H1 (cell line): ENCODE measurements at regions of chr3 and their contacts with region 1.

Region 1: GRCh38 chr3:172673210-172673679 is 37.6 kb downstream of the NCEH1 start:
- DNase-seq: peak in 1 of 2 experiments; percentile 78
- H3K4me3 ChIP-seq: no peak overlapping the region
- H3K27ac ChIP-seq: no peak overlapping the region
- H3K4me1 ChIP-seq: peaks cover 2 to 14% (median 10%) of the 10 kb centered on the region in 4 experiments; a peak in 5 of 7 replicates
- H3K27me3 ChIP-seq: no peaks in the 10 kb centered on the region
- CTCF ChIP-seq: peak; percentile 33 to 76 (median 72)
- EP300 ChIP-seq: no peak
- POLR2A ChIP-seq: no peak
- RAD21 ChIP-seq: peak; percentile 74 to 79

Region 2: GRCh38 chr3:172256101-172256734 is 417.0 kb before region 1 on chr3:
- CTCF ChIA-PET with region 1: no interaction called
- POLR2A ChIA-PET with region 1: no interaction called
- DNase-seq: no peak
- H3K4me3 ChIP-seq: no peak overlapping the region
- H3K27ac ChIP-seq: no peak overlapping the region
- H3K4me1 ChIP-seq: peaks cover 0 to 6% (median 4%) of the 10 kb centered on the region in 4 experiments; a peak in 5 of 7 replicates
- H3K27me3 ChIP-seq: no peaks in the 10 kb centered on the region
- CTCF ChIP-seq: no peak
- EP300 ChIP-seq: no peak
- POLR2A ChIP-seq: no peak
- RAD21 ChIP-seq: no peak

Region 3: GRCh38 chr3:172536993-172537419 is 136.2 kb before region 1 on chr3:
- CTCF ChIA-PET with region 1: no interaction called
- POLR2A ChIA-PET with region 1: no interaction called
- DNase-seq: no peak
- H3K4me3 ChIP-seq: no peak overlapping the region
- H3K27ac ChIP-seq: no peak overlapping the region
- H3K4me1 ChIP-seq: no peaks in the 10 kb centered on the region
- H3K27me3 ChIP-seq: no peaks in the 10 kb centered on the region
- CTCF ChIP-seq: no peak
- EP300 ChIP-seq: no peak
- POLR2A ChIP-seq: no peak
- RAD21 ChIP-seq: no peak

Region 4: GRCh38 chr3:172658344-172659245 is 14.7 kb before region 1 on chr3:
- CTCF ChIA-PET with region 1: interaction called, 26 read pairs
- POLR2A ChIA-PET with region 1: no interaction called
- DNase-seq: no peak
- H3K4me3 ChIP-seq: no peak overlapping the region
- H3K27ac ChIP-seq: no peak overlapping the region
- H3K4me1 ChIP-seq: peaks cover 0 to 2% (median 0%) of the 10 kb centered on the region in 4 experiments; a peak in 2 of 7 replicates
- H3K27me3 ChIP-seq: no peaks in the 10 kb centered on the region
- CTCF ChIP-seq: no peak
- EP300 ChIP-seq: no peak
- POLR2A ChIP-seq: no peak
- RAD21 ChIP-seq: no peak

Region 5: GRCh38 chr3:172692751-172693338 is 19.6 kb after region 1 on chr3:
- CTCF ChIA-PET with region 1: interaction called, 16 read pairs
- POLR2A ChIA-PET with region 1: interaction called, 3 read pairs
- DNase-seq: no peak
- H3K4me3 ChIP-seq: no peak overlapping the region
- H3K27ac ChIP-seq: no peak overlapping the region
- H3K4me1 ChIP-seq: peaks cover 0 to 10% (median under 1%) of the 10 kb centered on the region in 4 experiments; a peak in 2 of 7 replicates
- H3K27me3 ChIP-seq: no peaks in the 10 kb centered on the region
- CTCF ChIP-seq: no peak
- EP300 ChIP-seq: no peak
- POLR2A ChIP-seq: no peak
- RAD21 ChIP-seq: no peak

Region 6: DNA sequence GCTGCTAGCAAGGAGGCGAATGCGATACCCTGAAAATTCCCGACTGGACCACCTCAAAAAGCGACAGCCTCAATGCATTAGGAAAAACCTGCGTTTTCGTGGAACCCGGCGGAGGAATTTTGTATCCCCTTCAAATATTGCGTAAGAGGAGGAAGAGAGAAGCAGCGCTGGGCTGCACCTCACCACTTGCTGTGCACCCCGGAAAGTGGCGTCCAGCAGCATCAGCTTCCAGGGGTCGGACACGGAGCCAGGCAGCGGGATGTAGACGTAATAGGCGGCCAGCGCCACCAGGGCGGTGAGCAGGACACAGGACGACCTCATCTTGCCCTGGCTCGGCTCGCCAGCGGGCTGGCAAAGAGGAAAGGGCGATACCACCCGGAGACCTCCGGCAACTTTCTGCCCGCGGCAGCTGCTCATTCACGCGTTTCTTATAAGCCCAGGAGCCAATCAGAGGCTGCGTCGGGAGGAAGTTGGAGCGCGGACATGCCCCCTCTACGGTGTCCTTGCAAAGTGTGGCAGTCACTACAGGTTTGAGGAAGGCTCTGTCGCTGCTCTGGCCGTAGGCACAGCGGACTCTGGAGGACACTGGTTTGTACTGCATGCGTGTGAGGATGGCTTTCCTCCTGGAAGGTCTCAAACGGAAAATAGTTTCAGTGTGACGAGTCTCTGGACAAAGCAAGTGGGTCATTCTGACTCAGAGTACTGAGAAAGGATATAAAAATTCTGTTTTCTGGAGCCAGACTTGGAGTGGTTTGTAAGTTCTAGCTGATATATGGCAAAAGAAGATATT is 37.6 kb after region 1 on chr3 and contains the start of gene NCEH1:
- CTCF ChIA-PET with region 1: interaction called, 30 read pairs
- POLR2A ChIA-PET with region 1: no interaction called
- DNase-seq: peak; percentile 85 to 93
- H3K4me3 ChIP-seq: peak within 1 kb of the TSS; percentile 56 to 93 (median 90)
- H3K27ac ChIP-seq: no peak within 1 kb of the TSS
- H3K4me1 ChIP-seq: peaks cover 0 to 4% (median 0%) of the 10 kb centered on the region in 4 experiments; a peak in 1 of 7 replicates
- H3K27me3 ChIP-seq: 0 out of 7 replicates have a peak, but pooled peaks cover 0 to 1% (median 0%) of the 10 kb centered on the region in 4 experiments
- CTCF ChIP-seq: peak; percentile 84 to 91 (median 90)
- EP300 ChIP-seq: 0 out of 3 replicates have a peak, but pooled peaks of 1 of the 2 experiments have one; percentile 12
- POLR2A ChIP-seq: peak; percentile 44 to 86
- RAD21 ChIP-seq: peak; percentile 73 to 82
- total RNA-seq, gene NCEH1: 5.4 and 6.4 TPM in 2 replicates

Region 7: GRCh38 chr3:172750368-172751174 is 77.3 kb after region 1 on chr3 and contains the start of gene ECT2:
- CTCF ChIA-PET with region 1: interaction called, 34 read pairs
- POLR2A ChIA-PET with region 1: interaction called, 7 read pairs
- DNase-seq: peak; percentile 96 to 100
- H3K4me3 ChIP-seq: peak within 1 kb of the TSS; percentile 81 to 94 (median 90)
- H3K27ac ChIP-seq: peak within 1 kb of the TSS; percentile 89
- H3K4me1 ChIP-seq: no peaks in the 10 kb centered on the region; a peak in 1 of 7 replicates
- H3K27me3 ChIP-seq: no peaks in the 10 kb centered on the region
- CTCF ChIP-seq: peak; percentile 57 to 80 (median 71)
- EP300 ChIP-seq: peak; percentile 4 to 32; a peak in 1 of 3 replicates
- POLR2A ChIP-seq: peak; percentile 95 to 97
- RAD21 ChIP-seq: peak; percentile 53 to 61
- total RNA-seq, gene ECT2: 76.2 and 88.7 TPM in 2 replicates

Region 8: GRCh38 chr3:172832983-172833382 is 159.7 kb after region 1 on chr3:
- CTCF ChIA-PET with region 1: no interaction called
- POLR2A ChIA-PET with region 1: no interaction called
- DNase-seq: no peak
- H3K4me3 ChIP-seq: no peak overlapping the region
- H3K27ac ChIP-seq: no peak overlapping the region
- H3K4me1 ChIP-seq: no peaks in the 10 kb centered on the region
- H3K27me3 ChIP-seq: no peaks in the 10 kb centered on the region
- CTCF ChIP-seq: no peak
- EP300 ChIP-seq: no peak
- POLR2A ChIP-seq: no peak
- RAD21 ChIP-seq: no peak

Region 9: DNA sequence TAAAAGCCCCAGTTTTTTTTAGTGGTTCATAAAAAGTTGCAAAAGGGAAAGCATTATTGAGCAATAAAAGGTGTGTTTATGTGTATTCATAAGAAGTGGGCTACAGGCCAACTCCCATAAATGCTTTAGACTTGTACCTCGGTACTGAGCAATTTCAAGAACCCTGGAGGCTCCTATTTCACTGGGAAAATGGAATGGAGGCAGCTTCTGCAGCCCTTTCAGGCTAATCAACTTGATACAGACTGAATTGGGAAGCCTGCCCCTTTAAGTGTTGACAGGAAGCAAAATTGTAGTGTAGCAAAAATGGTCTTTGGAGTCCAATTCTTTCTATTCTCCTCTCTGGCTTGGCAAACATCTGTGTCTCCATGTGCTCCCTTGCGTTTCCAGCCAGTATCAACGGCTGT is 196.1 kb after region 1 on chr3:
- CTCF ChIA-PET with region 1: no interaction called
- POLR2A ChIA-PET with region 1: no interaction called
- DNase-seq: no peak
- H3K4me3 ChIP-seq: no peak overlapping the region
- H3K27ac ChIP-seq: no peak overlapping the region
- H3K4me1 ChIP-seq: peaks cover 0 to under 1% (median 0%) of the 10 kb centered on the region in 4 experiments; a peak in 1 of 7 replicates
- H3K27me3 ChIP-seq: peaks cover 0 to 1% (median 0%) of the 10 kb centered on the region in 4 experiments; a peak in 1 of 7 replicates
- CTCF ChIP-seq: no peak
- EP300 ChIP-seq: no peak
- POLR2A ChIP-seq: no peak
- RAD21 ChIP-seq: no peak